Tibial artery (tissue), 4 donors: ENCODE measurements at regions of chr2 and their contacts with region 1.

Region 1: DNA sequence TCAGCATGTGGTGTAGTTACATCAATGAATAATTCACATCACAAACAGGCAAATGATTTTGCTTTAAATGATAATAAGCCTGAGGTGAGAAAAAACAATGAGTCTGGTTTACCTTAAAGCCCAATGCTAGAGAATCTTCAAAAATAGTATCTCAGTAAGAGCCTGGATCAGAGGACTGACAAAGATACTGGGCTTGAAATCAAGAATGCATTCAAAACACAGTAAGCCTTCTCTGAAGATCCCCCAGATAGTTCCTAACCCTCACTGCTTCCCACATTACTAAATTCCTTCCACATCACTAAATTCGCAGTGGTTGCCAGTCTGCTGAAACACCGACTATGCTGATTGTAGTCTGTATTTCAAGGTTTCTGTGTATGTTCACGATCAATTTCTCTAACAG is 514.9 kb downstream of the SUCLG1 start:
- DNase-seq: no peak
- H3K4me3 ChIP-seq: no peak overlapping the region
- H3K27ac ChIP-seq: no peak overlapping the region
- H3K4me1 ChIP-seq: no peaks in the 10 kb centered on the region
- H3K27me3 ChIP-seq: no peaks in the 10 kb centered on the region
- CTCF ChIP-seq: no peak

Region 2: GRCh38 chr2:83923531-83923930 is 20.7 kb before region 1 on chr2:
- intact Hi-C with region 1: loop called (anchors 2 kb)
- DNase-seq: no peak
- H3K4me3 ChIP-seq: no peak overlapping the region
- H3K27ac ChIP-seq: no peak overlapping the region
- H3K4me1 ChIP-seq: no peaks in the 10 kb centered on the region
- H3K27me3 ChIP-seq: no peaks in the 10 kb centered on the region
- CTCF ChIP-seq: no peak

Region 3: DNA sequence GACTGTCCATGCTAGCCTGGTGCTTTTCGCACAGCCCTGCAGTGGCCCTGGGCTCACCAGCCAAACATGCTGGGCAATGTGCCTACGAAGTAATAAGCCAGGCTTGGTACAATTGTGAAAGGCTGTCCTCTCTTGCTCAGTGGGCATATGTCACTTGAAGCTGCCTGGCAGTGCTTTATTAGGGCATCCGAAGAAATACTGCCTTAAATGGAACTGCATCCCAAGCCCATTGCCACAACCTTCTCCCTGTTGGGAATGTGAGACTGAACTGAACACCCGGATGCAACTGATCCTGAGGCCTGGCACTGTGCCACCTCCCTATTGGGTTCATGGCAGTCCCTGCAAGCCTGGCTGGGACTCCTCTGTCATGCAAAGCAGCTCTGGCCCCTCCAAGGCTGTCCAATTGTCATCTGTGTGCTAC is 1450.1 kb after region 1 on chr2:
- intact Hi-C with region 1: no loop called
- DNase-seq: peak; percentile 74 to 92
- H3K4me3 ChIP-seq: no peak overlapping the region
- H3K27ac ChIP-seq: peak overlapping the region; percentile 73 to 78
- H3K4me1 ChIP-seq: peaks cover 0 to 47% (median 36%) of the 10 kb centered on the region in 4 donors
- H3K27me3 ChIP-seq: no peaks in the 10 kb centered on the region
- CTCF ChIP-seq: no peak